ENCODE measurements at regions of chr2 and their contacts with region 1.

Region 1: GRCh38 chr2:170815746-170816503 is 762 bp upstream of the GAD1 start:
- DNase-seq: peak in 8 of 9 donors; percentile 33 to 70 (median 58)
- ATAC-seq: peak; percentile 68
- H3K4me3 ChIP-seq: peak overlapping the region; percentile 54
- H3K4me3 Mint-ChIP-seq: peak overlapping the region; percentile 59 to 86 (median 74)
- H3K27ac ChIP-seq: no peak overlapping the region
- H3K27ac Mint-ChIP-seq: peak overlapping the region in 2 of 9 donors; percentile 56 to 79
- H3K4me1 ChIP-seq: peaks cover 37 to 48% of the 10 kb centered on the region in 2 donors
- H3K4me1 Mint-ChIP-seq: peaks cover 30 to 78% (median 56%) of the 10 kb centered on the region in 7 donors
- H3K27me3 ChIP-seq: peaks cover 30 to 44% of the 10 kb centered on the region in 2 donors
- H3K27me3 Mint-ChIP-seq: peaks cover 67 to 84% (median 73%) of the 10 kb centered on the region in 5 donors

Region 2: DNA sequence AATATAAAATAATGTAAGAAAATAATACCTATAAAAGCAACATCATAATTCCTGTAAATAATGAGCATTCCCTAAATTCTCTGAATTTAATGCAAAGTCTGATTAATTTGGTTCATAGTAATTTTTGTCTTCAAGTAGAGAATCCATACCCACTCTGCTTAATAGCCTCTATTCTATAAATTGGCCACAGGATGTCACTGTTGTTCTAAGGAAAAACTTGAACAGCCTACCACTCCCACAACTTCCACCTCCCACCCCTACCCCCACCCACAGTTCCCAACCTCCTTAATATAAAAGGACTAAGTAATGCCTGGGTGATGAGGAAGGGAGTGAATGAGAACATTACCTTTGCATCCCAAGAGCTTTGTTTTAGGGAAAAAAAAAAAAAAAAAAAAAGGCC is 1363.8 kb before region 1 on chr2:
- CTCF ChIA-PET with region 1: interaction called, 3 read pairs
- POLR2A ChIA-PET with region 1: no interaction called
- intact Hi-C with region 1: loop called in 1 of 2 experiments (anchors 10 kb)
- DNase-seq: no peak
- ATAC-seq: no peak
- H3K4me3 ChIP-seq: no peak overlapping the region
- H3K4me3 Mint-ChIP-seq: no peak overlapping the region
- H3K27ac ChIP-seq: no peak overlapping the region
- H3K27ac Mint-ChIP-seq: no peak overlapping the region
- H3K4me1 ChIP-seq: no peaks in the 10 kb centered on the region
- H3K4me1 Mint-ChIP-seq: no peaks in the 10 kb centered on the region
- H3K27me3 ChIP-seq: no peaks in the 10 kb centered on the region
- H3K27me3 Mint-ChIP-seq: peaks cover 6 to 12% (median 8%) of the 10 kb centered on the region in 5 donors

Region 3: DNA sequence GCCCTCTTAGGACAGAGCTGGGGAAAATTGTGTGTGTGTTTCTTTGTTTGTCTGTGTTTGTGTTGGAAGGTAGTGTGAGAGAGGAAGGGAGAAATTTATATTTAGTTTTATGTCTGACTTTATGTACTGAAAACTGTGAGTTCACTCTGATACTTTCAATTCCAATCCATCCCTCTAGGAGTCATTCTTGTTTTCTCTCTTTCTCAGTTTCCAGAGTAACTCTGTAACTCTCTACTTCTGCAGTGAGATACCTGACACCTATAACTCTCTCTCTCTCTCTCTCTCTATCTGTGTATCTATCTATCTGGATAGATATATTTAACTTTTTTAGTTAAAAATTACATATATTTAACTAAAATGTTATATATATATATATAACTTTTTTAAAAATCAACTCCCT is 860.0 kb before region 1 on chr2:
- CTCF ChIA-PET with region 1: no interaction called
- POLR2A ChIA-PET with region 1: no interaction called
- intact Hi-C with region 1: no loop called
- DNase-seq: no peak
- ATAC-seq: no peak
- H3K4me3 ChIP-seq: no peak overlapping the region
- H3K4me3 Mint-ChIP-seq: no peak overlapping the region
- H3K27ac ChIP-seq: no peak overlapping the region
- H3K27ac Mint-ChIP-seq: no peak overlapping the region
- H3K4me1 ChIP-seq: no peaks in the 10 kb centered on the region
- H3K4me1 Mint-ChIP-seq: peaks cover 0 to 8% (median 0%) of the 10 kb centered on the region in 7 donors
- H3K27me3 ChIP-seq: no peaks in the 10 kb centered on the region
- H3K27me3 Mint-ChIP-seq: no peaks in the 10 kb centered on the region

Region 4: DNA sequence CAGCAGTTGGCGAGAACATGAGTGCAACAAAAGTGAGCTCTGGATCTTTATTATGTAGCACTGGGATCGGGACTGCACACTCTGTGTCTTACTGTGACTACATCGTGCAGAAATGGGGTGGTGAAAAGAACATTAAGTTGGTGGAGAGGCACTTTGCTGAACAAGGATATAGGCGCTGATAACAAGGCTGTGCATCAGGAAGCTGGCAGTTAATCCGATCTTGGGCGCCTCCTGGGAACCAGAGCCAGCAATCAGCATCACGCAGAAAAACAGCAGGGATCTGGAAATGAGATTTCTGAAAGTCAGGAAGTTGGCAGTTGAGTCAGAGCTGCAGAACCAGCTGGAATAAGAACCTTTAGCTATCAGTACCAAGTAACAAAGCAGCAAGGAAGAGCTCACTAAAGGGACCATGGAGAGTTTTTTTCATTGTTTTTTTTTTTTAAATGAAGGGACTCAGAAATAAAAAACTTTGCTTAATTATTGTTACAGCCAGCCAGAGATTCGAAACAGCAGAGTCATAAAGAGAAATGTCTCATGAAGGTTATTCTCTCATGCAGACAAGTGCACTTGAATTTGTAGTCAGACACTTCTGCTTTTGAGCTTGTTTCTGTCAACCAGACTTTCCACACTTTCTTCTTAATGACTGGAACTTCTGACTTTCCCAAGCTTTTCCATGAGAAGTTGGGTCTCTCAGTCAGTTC is 660.8 kb before region 1 on chr2:
- CTCF ChIA-PET with region 1: no interaction called
- POLR2A ChIA-PET with region 1: no interaction called
- intact Hi-C with region 1: no loop called
- DNase-seq: no peak
- ATAC-seq: no peak
- H3K4me3 ChIP-seq: no peak overlapping the region
- H3K4me3 Mint-ChIP-seq: no peak overlapping the region
- H3K27ac ChIP-seq: no peak overlapping the region
- H3K27ac Mint-ChIP-seq: no peak overlapping the region
- H3K4me1 ChIP-seq: no peaks in the 10 kb centered on the region
- H3K4me1 Mint-ChIP-seq: no peaks in the 10 kb centered on the region
- H3K27me3 ChIP-seq: no peaks in the 10 kb centered on the region
- H3K27me3 Mint-ChIP-seq: peaks cover 0 to 12% (median 2%) of the 10 kb centered on the region in 5 donors

Region 5: GRCh38 chr2:170324640-170325046 is 491.3 kb before region 1 on chr2:
- CTCF ChIA-PET with region 1: interaction called, 3 read pairs
- POLR2A ChIA-PET with region 1: no interaction called
- intact Hi-C with region 1: loop called (anchors 1 kb)
- DNase-seq: peak in 8 of 9 donors; percentile 5 to 57 (median 34)
- ATAC-seq: peak; percentile 31
- H3K4me3 ChIP-seq: no peak overlapping the region
- H3K4me3 Mint-ChIP-seq: no peak overlapping the region
- H3K27ac ChIP-seq: no peak overlapping the region
- H3K27ac Mint-ChIP-seq: no peak overlapping the region
- H3K4me1 ChIP-seq: no peaks in the 10 kb centered on the region
- H3K4me1 Mint-ChIP-seq: peaks cover 0 to 2% (median 0%) of the 10 kb centered on the region in 7 donors
- H3K27me3 ChIP-seq: no peaks in the 10 kb centered on the region
- H3K27me3 Mint-ChIP-seq: peaks cover 0 to 7% (median 3%) of the 10 kb centered on the region in 5 donors

Region 6: GRCh38 chr2:170409164-170409535 is 406.8 kb before region 1 on chr2:
- CTCF ChIA-PET with region 1: interaction called, 54 read pairs
- POLR2A ChIA-PET with region 1: no interaction called
- intact Hi-C with region 1: loop called (anchors 1 kb)
- DNase-seq: peak; percentile 46 to 80 (median 69)
- ATAC-seq: peak; percentile 86
- H3K4me3 ChIP-seq: no peak overlapping the region
- H3K4me3 Mint-ChIP-seq: peak overlapping the region in 8 of 10 donors; percentile 61 to 80 (median 64)
- H3K27ac ChIP-seq: no peak overlapping the region
- H3K27ac Mint-ChIP-seq: peak overlapping the region in 2 of 9 donors; percentile 43 to 44
- H3K4me1 ChIP-seq: peaks cover 0 to 6% of the 10 kb centered on the region in 2 donors
- H3K4me1 Mint-ChIP-seq: peaks cover 5 to 15% (median 11%) of the 10 kb centered on the region in 7 donors
- H3K27me3 ChIP-seq: no peaks in the 10 kb centered on the region
- H3K27me3 Mint-ChIP-seq: peaks cover 24 to 32% (median 32%) of the 10 kb centered on the region in 5 donors

Region 7: DNA sequence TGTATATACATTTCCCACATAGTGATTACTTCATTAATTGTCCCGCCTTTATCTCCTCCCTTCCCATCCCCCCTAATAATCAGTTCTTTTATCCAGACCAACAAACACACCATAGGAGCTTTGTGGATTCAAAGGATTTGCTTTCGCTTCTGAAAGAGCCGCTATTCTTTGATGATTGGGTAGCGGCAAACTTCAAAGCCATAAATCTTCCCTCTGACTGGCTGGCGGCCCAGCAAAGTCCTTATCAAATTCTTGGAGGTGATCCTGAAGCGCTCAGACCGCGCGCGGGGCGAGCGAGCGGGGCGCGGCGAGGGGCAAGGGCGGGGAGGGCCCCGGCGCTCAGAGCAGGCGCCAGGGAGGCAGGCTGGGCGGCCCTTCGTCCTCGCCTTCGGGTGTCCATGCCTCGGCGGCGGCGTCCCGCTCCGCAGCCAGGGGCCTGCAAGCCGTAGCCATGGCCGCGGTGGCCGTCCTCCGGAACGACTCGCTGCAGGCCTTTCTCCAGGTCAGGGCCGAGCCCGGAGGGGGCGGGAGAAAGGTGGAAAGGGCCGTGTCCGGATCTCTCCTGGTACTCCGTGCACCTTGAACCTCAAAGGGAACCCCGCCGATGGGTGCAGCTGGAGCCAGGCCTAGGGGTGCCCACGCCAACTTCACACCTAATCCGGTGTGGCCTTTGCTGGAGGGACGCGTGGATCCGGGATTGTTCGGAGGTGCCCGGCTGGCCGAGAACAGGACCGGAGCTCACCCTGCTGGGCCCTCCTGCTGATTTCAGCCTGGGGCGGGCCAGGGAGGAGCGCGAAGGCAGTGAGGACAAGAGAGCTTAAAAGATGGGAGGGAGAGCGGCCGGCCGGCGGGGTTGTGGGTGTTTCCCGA is 100.6 kb before region 1 on chr2 and contains the start of gene SP5:
- CTCF ChIA-PET with region 1: interaction called, 3 read pairs
- POLR2A ChIA-PET with region 1: no interaction called
- intact Hi-C with region 1: loop called (anchors 1 to 5 kb)
- DNase-seq: peak; percentile 25 to 63 (median 52)
- ATAC-seq: peak; percentile 44
- H3K4me3 ChIP-seq: peak within 1 kb of the TSS; percentile 64
- H3K4me3 Mint-ChIP-seq: peak within 1 kb of the TSS; percentile 81 to 99 (median 93)
- H3K27ac ChIP-seq: no peak within 1 kb of the TSS
- H3K27ac Mint-ChIP-seq: peak within 1 kb of the TSS in 5 of 9 donors; percentile 47 to 76 (median 52)
- H3K4me1 ChIP-seq: peaks cover 0 to 39% of the 10 kb centered on the region in 2 donors
- H3K4me1 Mint-ChIP-seq: peaks cover 18 to 50% (median 34%) of the 10 kb centered on the region in 7 donors
- H3K27me3 ChIP-seq: peaks cover 11 to 41% of the 10 kb centered on the region in 2 donors
- H3K27me3 Mint-ChIP-seq: peaks cover 67 to 74% (median 69%) of the 10 kb centered on the region in 5 donors
- total RNA-seq, gene SP5: not detected

Region 8: DNA sequence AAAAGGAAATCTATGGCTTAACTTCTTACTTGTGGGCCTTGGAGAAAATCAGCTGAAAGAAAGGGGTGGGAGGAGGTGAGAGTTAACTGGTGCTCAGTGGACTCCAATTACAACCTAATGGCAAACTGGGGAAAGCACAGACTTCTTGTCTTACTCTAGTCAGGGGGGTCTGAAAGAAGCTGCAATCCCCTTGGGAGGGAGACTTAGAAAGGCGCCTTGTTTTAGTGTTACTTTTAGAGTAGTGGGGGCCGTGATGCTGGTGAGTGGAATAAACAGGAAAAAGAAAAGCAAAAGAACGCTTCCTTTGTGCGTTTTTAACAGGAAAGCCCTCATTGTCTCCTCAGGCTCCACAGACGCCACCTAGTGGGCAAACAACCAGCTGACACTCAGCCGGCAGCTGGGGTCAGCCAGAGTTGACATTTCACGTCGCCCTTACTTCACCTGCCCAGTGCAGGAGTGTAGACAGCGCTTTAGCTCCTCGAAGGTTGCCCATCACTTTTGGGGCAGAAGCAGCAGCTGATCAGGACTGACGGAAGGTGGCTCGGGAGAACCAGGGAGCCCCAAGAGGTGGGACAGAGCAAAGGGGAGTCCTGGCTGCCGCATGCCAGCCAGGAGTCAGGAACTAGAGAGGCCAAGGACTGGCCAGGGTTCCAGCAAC is 57.2 kb after region 1 on chr2:
- CTCF ChIA-PET with region 1: interaction called, 3 read pairs
- POLR2A ChIA-PET with region 1: no interaction called
- intact Hi-C with region 1: loop called (anchors 1 to 2 kb)
- DNase-seq: peak; percentile 41 to 75 (median 61)
- ATAC-seq: peak; percentile 86
- H3K4me3 ChIP-seq: peak overlapping the region; percentile 27
- H3K4me3 Mint-ChIP-seq: peak overlapping the region; percentile 26 to 86 (median 74)
- H3K27ac ChIP-seq: no peak overlapping the region
- H3K27ac Mint-ChIP-seq: peak overlapping the region in 7 of 9 donors; percentile 12 to 70 (median 35)
- H3K4me1 ChIP-seq: peaks cover 2 to 8% of the 10 kb centered on the region in 2 donors
- H3K4me1 Mint-ChIP-seq: peaks cover 9 to 21% (median 17%) of the 10 kb centered on the region in 7 donors
- H3K27me3 ChIP-seq: no peaks in the 10 kb centered on the region
- H3K27me3 Mint-ChIP-seq: peaks cover 0 to 12% (median 8%) of the 10 kb centered on the region in 5 donors

Measured in naive thymus-derived CD4-positive, alpha-beta T cell (primary cell).